ENCODE measurements at regions of chr13 and their contacts with region 1.

Region 1: GRCh38 chr13:23741879-23742510 is 147.2 kb downstream of the MIPEP start:
- DNase-seq: peak; percentile 9 to 68
- H3K4me3 ChIP-seq: no peak overlapping the region
- H3K27ac ChIP-seq: no peak overlapping the region
- H3K4me1 ChIP-seq: no peaks in the 10 kb centered on the region
- H3K27me3 ChIP-seq: no peaks in the 10 kb centered on the region
- CTCF ChIP-seq: peak; percentile 74 to 81 (median 79)
- EP300 ChIP-seq: no peak
- POLR2A ChIP-seq: no peak
- RAD21 ChIP-seq: peak; percentile 27 to 47; a peak in 3 of 4 replicates

Region 2: DNA sequence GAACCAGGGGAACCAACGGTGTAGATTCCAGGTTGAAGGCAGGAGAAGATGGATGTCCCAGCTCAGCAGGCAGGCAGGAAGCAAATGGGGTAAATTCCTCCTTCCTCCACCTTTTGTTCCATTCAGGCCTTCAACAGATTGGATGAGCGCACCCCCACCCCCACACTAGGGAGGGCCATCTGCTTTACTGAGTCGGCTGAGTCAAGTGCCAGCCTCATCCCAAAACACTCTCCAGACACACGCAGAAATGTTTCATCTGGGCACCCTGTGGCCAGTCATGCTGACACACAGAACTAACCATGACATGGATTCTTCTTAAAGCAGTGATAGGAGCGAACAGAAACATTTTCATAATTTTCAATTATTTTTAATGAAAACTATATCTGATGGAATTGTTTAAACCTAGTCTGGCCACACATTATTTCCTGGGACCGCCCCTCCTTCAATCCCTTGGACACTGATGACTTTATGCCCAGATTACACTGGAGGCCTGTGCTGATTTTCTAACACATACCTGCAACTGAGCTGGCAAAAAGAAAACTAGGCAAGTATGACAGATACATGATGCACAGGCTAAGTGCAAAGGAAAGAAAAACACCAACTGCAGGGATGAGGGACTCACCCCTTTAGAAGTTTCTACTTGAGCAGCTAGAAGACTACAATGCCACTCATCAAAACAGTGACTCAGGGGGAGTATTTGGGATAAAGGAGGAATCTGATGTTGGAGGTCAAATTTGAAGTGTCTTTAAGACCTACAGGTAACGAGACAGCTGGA is 17.6 kb before region 1 on chr13:
- CTCF ChIA-PET with region 1: interaction called, 21 read pairs
- POLR2A ChIA-PET with region 1: no interaction called
- DNase-seq: no peak
- H3K4me3 ChIP-seq: no peak overlapping the region
- H3K27ac ChIP-seq: no peak overlapping the region
- H3K4me1 ChIP-seq: peaks cover 0 to 2% (median 0%) of the 10 kb centered on the region in 4 experiments; a peak in 2 of 7 replicates
- H3K27me3 ChIP-seq: no peaks in the 10 kb centered on the region
- CTCF ChIP-seq: no peak
- EP300 ChIP-seq: no peak
- POLR2A ChIP-seq: no peak
- RAD21 ChIP-seq: no peak

Region 3: GRCh38 chr13:23766283-23766682 is 24.3 kb after region 1 on chr13:
- CTCF ChIA-PET with region 1: interaction called, 10 read pairs
- POLR2A ChIA-PET with region 1: no interaction called
- DNase-seq: no peak
- H3K4me3 ChIP-seq: no peak overlapping the region
- H3K27ac ChIP-seq: no peak overlapping the region
- H3K4me1 ChIP-seq: no peaks in the 10 kb centered on the region; a peak in 2 of 7 replicates
- H3K27me3 ChIP-seq: no peaks in the 10 kb centered on the region
- CTCF ChIP-seq: no peak
- EP300 ChIP-seq: no peak
- POLR2A ChIP-seq: no peak
- RAD21 ChIP-seq: no peak

Region 4: GRCh38 chr13:23928985-23929384 is 187.0 kb after region 1 on chr13:
- CTCF ChIA-PET with region 1: no interaction called
- POLR2A ChIA-PET with region 1: no interaction called
- DNase-seq: no peak
- H3K4me3 ChIP-seq: no peak overlapping the region
- H3K27ac ChIP-seq: no peak overlapping the region
- H3K4me1 ChIP-seq: no peaks in the 10 kb centered on the region
- H3K27me3 ChIP-seq: no peaks in the 10 kb centered on the region
- CTCF ChIP-seq: no peak
- EP300 ChIP-seq: no peak
- POLR2A ChIP-seq: no peak
- RAD21 ChIP-seq: no peak

Measured in H1 (cell line).